ENCODE measurements at regions of chr20 and their contacts with region 1.

Region 1: DNA sequence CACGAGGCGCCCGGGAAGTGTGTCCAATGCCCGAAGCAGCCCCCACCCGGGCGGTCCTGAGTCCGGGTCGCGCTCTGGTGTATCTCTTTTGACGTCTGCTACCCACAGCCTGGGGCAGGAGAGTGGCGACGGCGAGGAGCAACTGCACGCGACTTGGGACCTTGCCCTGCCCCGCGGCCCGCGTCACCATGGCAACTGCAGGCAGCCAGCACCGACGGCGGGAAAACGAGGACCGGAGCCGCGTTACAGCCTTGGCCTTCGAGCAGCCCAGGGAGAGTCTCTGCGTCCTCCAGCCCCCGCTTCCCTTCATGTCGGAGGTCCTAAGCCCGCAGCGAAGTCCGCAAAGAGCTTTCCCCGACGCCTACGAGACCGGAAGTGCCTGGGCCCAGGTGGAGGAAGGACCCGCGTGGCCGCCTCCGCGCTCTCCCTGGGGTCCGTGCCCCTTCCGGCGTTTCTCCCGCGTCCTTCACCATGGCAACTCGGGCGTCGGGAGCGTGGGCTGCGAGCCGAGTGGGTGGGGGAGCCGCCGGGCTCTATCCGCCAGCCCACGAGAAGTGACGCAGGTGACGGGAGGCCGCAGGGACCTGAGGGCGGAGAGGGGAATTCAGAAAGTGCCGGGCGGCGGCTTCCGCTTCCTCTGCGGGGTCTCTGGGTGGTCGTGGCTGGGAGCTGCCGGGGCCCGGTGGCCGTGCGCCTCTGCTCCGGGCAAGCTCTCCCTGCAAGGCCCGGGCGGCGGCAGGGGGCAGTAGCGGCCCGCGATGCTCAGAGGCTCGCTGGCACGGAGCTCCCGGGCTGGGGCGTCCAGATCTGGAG is 88.6 kb upstream of the TGM3 start:
- DNase-seq: peak; percentile 39 to 91
- H3K4me3 ChIP-seq: peak overlapping the region; percentile 35 to 71 (median 68)
- H3K27ac ChIP-seq: no peak overlapping the region
- H3K4me1 ChIP-seq: no peaks in the 10 kb centered on the region; a peak in 2 of 7 replicates
- H3K27me3 ChIP-seq: peaks cover 0 to 5% (median 3%) of the 10 kb centered on the region in 4 experiments; a peak in 4 of 7 replicates
- CTCF ChIP-seq: peak; percentile 71 to 90 (median 82)
- EP300 ChIP-seq: no peak
- POLR2A ChIP-seq: no peak
- RAD21 ChIP-seq: peak; percentile 90 to 93

Region 2: GRCh38 chr20:1576641-1577040 is 630.5 kb before region 1 on chr20:
- CTCF ChIA-PET with region 1: no interaction called
- POLR2A ChIA-PET with region 1: no interaction called
- DNase-seq: no peak
- H3K4me3 ChIP-seq: no peak overlapping the region
- H3K27ac ChIP-seq: no peak overlapping the region
- H3K4me1 ChIP-seq: no peaks in the 10 kb centered on the region
- H3K27me3 ChIP-seq: no peaks in the 10 kb centered on the region
- CTCF ChIP-seq: no peak
- EP300 ChIP-seq: no peak
- POLR2A ChIP-seq: no peak
- RAD21 ChIP-seq: no peak

Region 3: GRCh38 chr20:2122936-2123335 is 84.2 kb before region 1 on chr20:
- CTCF ChIA-PET with region 1: no interaction called
- POLR2A ChIA-PET with region 1: no interaction called
- DNase-seq: no peak
- H3K4me3 ChIP-seq: no peak overlapping the region
- H3K27ac ChIP-seq: no peak overlapping the region
- H3K4me1 ChIP-seq: peaks cover 0 to 10% (median 0%) of the 10 kb centered on the region in 4 experiments; a peak in 1 of 7 replicates
- H3K27me3 ChIP-seq: no peaks in the 10 kb centered on the region
- CTCF ChIP-seq: no peak
- EP300 ChIP-seq: no peak
- POLR2A ChIP-seq: no peak
- RAD21 ChIP-seq: no peak

Region 4: DNA sequence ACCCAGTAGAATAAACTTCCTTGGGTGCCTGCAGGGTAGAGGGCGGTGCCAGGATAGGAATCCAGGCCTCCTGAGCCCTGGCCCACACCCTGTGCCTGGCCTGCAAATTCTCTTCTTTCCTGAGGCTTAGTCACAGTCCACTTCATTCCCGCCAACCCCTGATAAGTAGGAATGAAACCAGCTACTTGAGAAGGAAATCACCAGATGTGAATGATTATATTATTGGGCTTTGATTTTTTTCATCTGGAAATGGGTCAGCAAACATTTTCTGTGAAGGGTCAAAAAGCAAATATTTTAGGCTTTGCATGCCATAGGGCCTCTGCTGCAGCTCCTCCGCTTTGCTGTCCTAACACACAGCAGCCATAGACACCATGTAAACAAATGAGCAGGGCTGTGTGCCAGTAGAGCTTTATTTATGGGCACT is 55.3 kb before region 1 on chr20:
- CTCF ChIA-PET with region 1: no interaction called
- POLR2A ChIA-PET with region 1: no interaction called
- DNase-seq: no peak
- H3K4me3 ChIP-seq: no peak overlapping the region
- H3K27ac ChIP-seq: no peak overlapping the region
- H3K4me1 ChIP-seq: peaks cover 2 to 6% (median 4%) of the 10 kb centered on the region in 4 experiments; a peak in 5 of 7 replicates
- H3K27me3 ChIP-seq: no peaks in the 10 kb centered on the region
- CTCF ChIP-seq: no peak
- EP300 ChIP-seq: no peak
- POLR2A ChIP-seq: no peak
- RAD21 ChIP-seq: no peak

Region 5: DNA sequence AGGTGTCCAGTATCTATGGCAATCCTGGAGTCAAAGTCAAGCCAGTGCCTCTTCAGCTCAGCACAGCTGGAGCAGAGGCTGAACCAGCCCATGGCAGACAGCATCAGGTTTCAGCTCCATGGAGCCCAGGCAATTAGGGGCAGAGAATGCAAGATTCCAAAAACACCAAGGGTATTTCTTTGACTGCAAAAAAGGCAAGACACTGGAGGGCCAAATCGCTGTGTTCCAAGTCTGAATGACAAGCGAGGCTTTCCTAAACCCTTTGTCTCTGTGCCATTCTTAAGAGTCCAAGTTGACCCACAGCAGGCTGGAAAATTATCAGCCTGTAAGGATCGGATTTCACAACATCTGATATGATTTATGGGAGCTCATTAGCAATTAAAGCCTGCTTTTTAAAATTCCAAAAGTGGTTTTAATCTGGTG is 38.9 kb after region 1 on chr20:
- CTCF ChIA-PET with region 1: interaction called, 15 read pairs
- POLR2A ChIA-PET with region 1: interaction called, 6 read pairs
- DNase-seq: no peak
- H3K4me3 ChIP-seq: no peak overlapping the region
- H3K27ac ChIP-seq: no peak overlapping the region
- H3K4me1 ChIP-seq: peaks cover 13 to 23% (median 17%) of the 10 kb centered on the region in 4 experiments
- H3K27me3 ChIP-seq: no peaks in the 10 kb centered on the region
- CTCF ChIP-seq: no peak
- EP300 ChIP-seq: no peak
- POLR2A ChIP-seq: no peak
- RAD21 ChIP-seq: no peak

Region 6: GRCh38 chr20:2338411-2339066 is 131.4 kb after region 1 on chr20:
- CTCF ChIA-PET with region 1: interaction called, 31 read pairs
- POLR2A ChIA-PET with region 1: no interaction called
- DNase-seq: no peak
- H3K4me3 ChIP-seq: no peak overlapping the region
- H3K27ac ChIP-seq: no peak overlapping the region
- H3K4me1 ChIP-seq: no peaks in the 10 kb centered on the region
- H3K27me3 ChIP-seq: no peaks in the 10 kb centered on the region
- CTCF ChIP-seq: no peak
- EP300 ChIP-seq: no peak
- POLR2A ChIP-seq: no peak
- RAD21 ChIP-seq: no peak

Region 7: GRCh38 chr20:2379511-2380229 is 172.5 kb after region 1 on chr20:
- CTCF ChIA-PET with region 1: interaction called, 13 read pairs
- POLR2A ChIA-PET with region 1: interaction called, 4 read pairs
- DNase-seq: no peak
- H3K4me3 ChIP-seq: no peak overlapping the region
- H3K27ac ChIP-seq: peak overlapping the region; percentile 64; the same call in 1 of the 2 replicates
- H3K4me1 ChIP-seq: peaks cover 0 to 12% (median 9%) of the 10 kb centered on the region in 4 experiments; a peak in 6 of 7 replicates
- H3K27me3 ChIP-seq: no peaks in the 10 kb centered on the region
- CTCF ChIP-seq: no peak
- EP300 ChIP-seq: no peak
- POLR2A ChIP-seq: no peak
- RAD21 ChIP-seq: no peak